ENCODE measurements at regions of chr5 and their contacts with region 1.

Region 1: GRCh38 chr5:14552017-14552416 is 29.6 kb upstream of the OTULINL start:
- DNase-seq: no peak
- ATAC-seq: no peak
- H3K4me3 ChIP-seq: no peak overlapping the region
- H3K27ac ChIP-seq: no peak overlapping the region
- H3K4me1 ChIP-seq: no peaks in the 10 kb centered on the region
- H3K27me3 ChIP-seq: peaks cover 23% of the 10 kb centered on the region
- CTCF ChIP-seq: no peak
- POLR2A ChIP-seq: no peak
- RAD21 ChIP-seq: no peak

Region 2: GRCh38 chr5:14190194-14191164 is 361.5 kb before region 1 on chr5:
- CTCF ChIA-PET with region 1: no interaction called
- POLR2A ChIA-PET with region 1: no interaction called
- dilution Hi-C with region 1: no loop called
- in situ Hi-C with region 1: no loop called
- intact Hi-C with region 1: no loop called
- DNase-seq: peak; percentile 99
- ATAC-seq: peak; percentile 83
- H3K4me3 ChIP-seq: no peak overlapping the region
- H3K27ac ChIP-seq: peak overlapping the region; percentile 99
- H3K4me1 ChIP-seq: peaks cover 29% of the 10 kb centered on the region
- H3K27me3 ChIP-seq: no peaks in the 10 kb centered on the region
- CTCF ChIP-seq: no peak
- POLR2A ChIP-seq: peak; percentile 51; the same call in 1 of the 2 replicates
- RAD21 ChIP-seq: peak; percentile 25

Region 3: GRCh38 chr5:14628346-14628745 is 76.3 kb after region 1 on chr5:
- CTCF ChIA-PET with region 1: no interaction called
- POLR2A ChIA-PET with region 1: no interaction called
- dilution Hi-C with region 1: no loop called
- in situ Hi-C with region 1: no loop called
- intact Hi-C with region 1: loop called (anchors 5 kb)
- DNase-seq: peak; percentile 64
- ATAC-seq: peak; percentile 82
- H3K4me3 ChIP-seq: no peak overlapping the region
- H3K27ac ChIP-seq: no peak overlapping the region
- H3K4me1 ChIP-seq: no peaks in the 10 kb centered on the region
- H3K27me3 ChIP-seq: peaks cover 4% of the 10 kb centered on the region
- CTCF ChIP-seq: no peak
- POLR2A ChIP-seq: no peak
- RAD21 ChIP-seq: no peak

Measured in IMR-90 (cell line).